CD14-positive monocyte (primary cell): ENCODE measurements at regions of chr1 and their contacts with region 1.

Region 1: DNA sequence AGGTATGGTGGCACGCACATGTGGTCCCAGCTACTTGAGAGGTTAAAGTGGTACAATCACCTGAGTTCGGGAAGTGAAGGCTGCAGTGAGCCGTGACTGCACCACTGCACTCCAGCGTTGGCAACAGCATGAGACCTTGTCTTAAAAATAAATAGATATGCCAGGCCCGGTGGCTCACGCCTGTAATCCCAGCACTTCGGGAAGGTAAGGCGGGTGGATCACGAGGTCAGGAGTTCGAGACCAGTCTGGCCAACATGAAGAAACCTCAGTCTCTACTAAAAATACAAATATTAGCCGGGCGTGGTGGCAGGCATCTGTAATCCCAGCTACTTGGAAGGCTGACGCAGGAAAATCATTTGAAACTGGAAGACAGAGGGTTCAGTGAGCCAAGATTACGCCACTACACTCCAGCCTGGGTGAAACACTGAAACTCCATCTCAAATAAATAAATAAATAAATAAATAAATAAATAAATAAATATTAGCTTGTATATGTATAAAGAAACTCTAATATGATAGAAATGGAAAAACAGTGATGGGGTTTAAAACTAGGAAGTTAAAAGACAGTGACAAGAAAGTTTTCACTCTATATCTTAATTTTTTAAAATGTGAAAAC is 18.8 kb downstream of the GATAD2B start:
- DNase-seq: no peak
- H3K4me3 ChIP-seq: no peak overlapping the region
- H3K4me3 Mint-ChIP-seq: no peak overlapping the region
- H3K27ac ChIP-seq: no peak overlapping the region
- H3K27ac Mint-ChIP-seq: peak overlapping the region in 2 of 7 donors; percentile 54 to 85
- H3K4me1 ChIP-seq: no peaks in the 10 kb centered on the region
- H3K4me1 Mint-ChIP-seq: peaks cover 5% of the 10 kb centered on the region
- H3K27me3 ChIP-seq: no peaks in the 10 kb centered on the region
- H3K27me3 Mint-ChIP-seq: no peaks in the 10 kb centered on the region
- CTCF ChIP-seq: no peak

Region 2: DNA sequence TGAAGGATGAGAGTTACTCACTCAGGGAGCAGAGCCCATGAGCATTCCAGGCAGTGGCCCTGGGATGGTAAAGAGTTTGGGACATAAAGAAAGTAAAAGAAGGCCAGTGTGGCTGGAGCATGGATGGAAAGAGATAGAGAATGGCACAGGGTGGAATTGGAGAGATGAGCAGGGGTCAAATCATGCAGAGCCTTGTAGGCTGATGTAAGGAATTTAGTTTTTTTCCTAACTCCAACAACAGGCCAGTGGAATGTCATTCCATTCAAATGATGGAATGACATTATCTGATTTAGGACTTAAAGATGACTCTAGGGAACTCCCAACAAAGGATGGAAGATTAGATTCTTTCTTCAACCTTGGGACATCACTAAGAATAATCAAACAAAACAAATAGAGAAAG is 325.5 kb before region 1 on chr1:
- intact Hi-C with region 1: no loop called
- DNase-seq: no peak
- H3K4me3 ChIP-seq: no peak overlapping the region
- H3K4me3 Mint-ChIP-seq: no peak overlapping the region
- H3K27ac ChIP-seq: no peak overlapping the region
- H3K27ac Mint-ChIP-seq: no peak overlapping the region
- H3K4me1 ChIP-seq: peaks cover 11 to 16% of the 10 kb centered on the region in 2 donors
- H3K4me1 Mint-ChIP-seq: peaks cover 17% of the 10 kb centered on the region
- H3K27me3 ChIP-seq: no peaks in the 10 kb centered on the region
- H3K27me3 Mint-ChIP-seq: peaks cover 1 to 7% (median 2%) of the 10 kb centered on the region in 3 donors
- CTCF ChIP-seq: no peak

Region 3: GRCh38 chr1:153842006-153842471 is 61.9 kb before region 1 on chr1:
- intact Hi-C with region 1: loop called in 1 of 2 experiments (anchors 10 kb)
- DNase-seq: no peak
- H3K4me3 ChIP-seq: no peak overlapping the region
- H3K4me3 Mint-ChIP-seq: no peak overlapping the region
- H3K27ac ChIP-seq: no peak overlapping the region
- H3K27ac Mint-ChIP-seq: peak overlapping the region in 2 of 7 donors; percentile 19 to 61
- H3K4me1 ChIP-seq: peaks cover 4 to 6% of the 10 kb centered on the region in 2 donors
- H3K4me1 Mint-ChIP-seq: peaks cover 32% of the 10 kb centered on the region
- H3K27me3 ChIP-seq: no peaks in the 10 kb centered on the region
- H3K27me3 Mint-ChIP-seq: peaks cover 0 to 1% (median 0%) of the 10 kb centered on the region in 3 donors
- CTCF ChIP-seq: no peak